Body of pancreas (tissue), 4 donors: ENCODE measurements at regions of chr4 and their contacts with region 1.

Region 1: DNA sequence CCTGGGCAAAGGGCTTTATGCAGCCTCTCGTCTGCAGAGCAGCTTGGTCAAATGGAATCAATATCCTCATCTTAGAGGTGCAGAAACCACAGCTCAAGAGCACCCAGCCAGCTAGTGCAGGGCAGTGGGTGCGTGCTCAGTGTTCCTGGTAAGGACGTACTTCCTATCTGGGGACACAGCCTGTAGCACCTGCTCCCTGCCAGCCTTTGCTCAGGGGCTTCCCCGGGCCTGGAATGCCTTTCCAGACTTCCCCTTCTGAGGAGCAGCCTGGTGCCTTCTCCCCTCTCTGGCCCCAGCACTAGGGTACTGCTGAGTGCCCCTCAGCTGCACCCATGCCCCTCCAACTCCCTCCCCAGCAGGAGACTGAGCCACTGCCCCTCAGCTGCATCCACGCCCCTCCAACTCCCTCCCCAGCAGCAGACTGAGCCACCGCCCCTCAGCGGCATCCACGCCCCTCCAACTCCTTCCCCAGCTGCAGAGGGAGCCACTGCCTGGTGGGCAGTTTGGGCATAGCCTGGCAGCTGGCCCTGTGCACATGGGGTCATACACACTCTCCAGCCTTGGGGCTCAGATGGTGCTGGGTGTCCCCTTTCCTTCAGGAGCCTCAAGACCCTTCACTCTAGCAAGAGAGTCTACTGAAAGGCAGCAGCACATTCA is 42.2 kb upstream of the AFAP1 start:
- DNase-seq: no peak
- ATAC-seq: no peak
- H3K4me3 ChIP-seq: no peak overlapping the region
- H3K27ac ChIP-seq: no peak overlapping the region
- H3K4me1 ChIP-seq: no peaks in the 10 kb centered on the region
- H3K27me3 ChIP-seq: no peaks in the 10 kb centered on the region
- CTCF ChIP-seq: no peak
- POLR2A ChIP-seq: no peak

Region 2: DNA sequence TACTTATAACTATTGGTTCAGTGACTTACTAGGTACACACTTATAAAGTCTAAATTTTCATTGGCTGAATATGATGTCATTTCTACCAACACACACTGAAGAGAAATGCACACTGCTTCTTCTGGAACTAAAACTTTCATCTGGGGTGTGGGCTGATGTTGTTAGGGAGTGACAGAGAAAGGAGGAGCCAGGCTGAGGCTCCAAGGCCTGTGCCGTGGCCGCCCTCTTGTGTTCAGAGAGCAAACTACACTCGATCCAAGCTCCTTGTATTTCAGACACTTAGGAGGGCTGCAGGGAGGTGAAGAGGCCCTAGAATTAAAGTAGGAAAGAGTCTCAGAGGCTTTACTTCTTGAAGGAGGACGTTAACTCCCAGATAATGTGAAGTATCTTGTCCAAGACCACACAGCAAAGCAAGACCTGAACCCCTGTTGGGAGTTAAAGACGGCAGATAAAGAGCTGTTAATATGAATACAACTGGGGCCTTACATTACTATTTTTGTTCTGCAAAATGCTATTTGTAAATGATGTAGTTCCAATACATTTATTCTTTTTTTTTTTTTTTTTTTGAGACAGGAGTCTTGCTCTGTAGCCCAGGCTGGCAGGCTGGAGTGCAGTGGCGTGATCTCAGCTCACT is 179.7 kb before region 1 on chr4:
- intact Hi-C with region 1: loop called (anchors 5 kb)
- DNase-seq: peak; percentile 71 to 84 (median 78)
- ATAC-seq: peak; percentile 55
- H3K4me3 ChIP-seq: no peak overlapping the region
- H3K27ac ChIP-seq: no peak overlapping the region
- H3K4me1 ChIP-seq: peaks cover 31% of the 10 kb centered on the region
- H3K27me3 ChIP-seq: no peaks in the 10 kb centered on the region
- CTCF ChIP-seq: peak; percentile 71 to 82 (median 76)
- POLR2A ChIP-seq: no peak

Region 3: DNA sequence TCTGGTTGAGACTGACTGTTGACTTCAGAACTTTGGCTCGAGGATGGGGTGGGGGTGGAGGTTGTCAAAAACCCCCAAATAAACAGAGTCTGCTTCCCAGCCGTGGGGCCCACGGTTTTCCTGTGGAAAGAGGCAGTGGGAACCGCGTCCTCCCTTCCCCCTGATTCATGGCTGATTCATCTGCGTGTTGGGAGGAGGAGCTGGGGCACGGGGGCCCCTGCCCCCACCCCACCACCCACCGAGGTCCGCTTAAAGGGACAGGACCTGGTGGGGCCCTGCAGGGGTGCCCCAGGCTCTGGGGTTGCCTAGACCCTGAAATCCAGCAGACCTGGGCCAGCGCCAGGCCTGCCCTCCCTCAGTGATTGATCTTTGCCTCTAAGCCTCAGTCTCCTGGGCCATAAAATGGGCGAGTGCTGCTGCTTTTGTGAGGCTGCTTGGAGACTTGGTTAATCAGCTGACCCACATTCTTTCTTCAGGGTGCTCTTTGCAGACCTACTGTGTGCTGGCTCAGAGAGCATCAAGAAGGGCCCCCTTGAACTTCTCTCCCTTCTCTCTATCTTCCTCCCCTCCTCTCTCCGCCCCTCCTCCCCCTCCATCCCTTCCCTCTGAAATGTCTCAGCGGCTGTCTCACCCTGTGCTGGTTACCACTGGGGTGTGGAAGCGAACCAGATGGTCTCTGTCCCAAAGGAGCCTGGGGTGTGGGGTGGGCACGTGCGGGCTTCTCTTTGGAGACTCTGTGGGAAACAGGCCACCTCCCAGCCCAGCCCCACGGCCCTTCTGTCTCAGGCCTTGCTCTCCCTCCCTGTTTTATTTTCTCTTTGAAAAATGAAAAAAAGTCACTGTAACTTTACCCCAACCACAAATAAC is 296.8 kb after region 1 on chr4:
- intact Hi-C with region 1: no loop called
- DNase-seq: no peak
- ATAC-seq: peak; percentile 19
- H3K4me3 ChIP-seq: no peak overlapping the region
- H3K27ac ChIP-seq: no peak overlapping the region
- H3K4me1 ChIP-seq: no peaks in the 10 kb centered on the region
- H3K27me3 ChIP-seq: no peaks in the 10 kb centered on the region
- CTCF ChIP-seq: no peak
- POLR2A ChIP-seq: no peak